ENCODE measurements at regions of chr6 and their contacts with region 1.

Region 1: GRCh38 chr6:148746363-148747144 is at the start of gene UST:
- DNase-seq: peak; percentile 90 to 97
- H3K4me3 ChIP-seq: peak within 1 kb of the TSS; percentile 64
- CTCF ChIP-seq: no peak
- POLR2A ChIP-seq: no peak
- total RNA-seq, gene UST: 12.2 to 21.7 (median 17.7) TPM

Region 2: GRCh38 chr6:148947621-148948444 is 201.3 kb after region 1 on chr6:
- intact Hi-C with region 1: loop called (anchors 10 kb)
- DNase-seq: peak; percentile 81 to 97
- H3K4me3 ChIP-seq: no peak overlapping the region
- CTCF ChIP-seq: peak in 1 of 3 donors; percentile 73
- POLR2A ChIP-seq: no peak

Measured in lower leg skin (tissue), 4 donors.